OCI-LY7 (cell line): ENCODE measurements at regions of chr18 and their contacts with region 1.

Region 1: DNA sequence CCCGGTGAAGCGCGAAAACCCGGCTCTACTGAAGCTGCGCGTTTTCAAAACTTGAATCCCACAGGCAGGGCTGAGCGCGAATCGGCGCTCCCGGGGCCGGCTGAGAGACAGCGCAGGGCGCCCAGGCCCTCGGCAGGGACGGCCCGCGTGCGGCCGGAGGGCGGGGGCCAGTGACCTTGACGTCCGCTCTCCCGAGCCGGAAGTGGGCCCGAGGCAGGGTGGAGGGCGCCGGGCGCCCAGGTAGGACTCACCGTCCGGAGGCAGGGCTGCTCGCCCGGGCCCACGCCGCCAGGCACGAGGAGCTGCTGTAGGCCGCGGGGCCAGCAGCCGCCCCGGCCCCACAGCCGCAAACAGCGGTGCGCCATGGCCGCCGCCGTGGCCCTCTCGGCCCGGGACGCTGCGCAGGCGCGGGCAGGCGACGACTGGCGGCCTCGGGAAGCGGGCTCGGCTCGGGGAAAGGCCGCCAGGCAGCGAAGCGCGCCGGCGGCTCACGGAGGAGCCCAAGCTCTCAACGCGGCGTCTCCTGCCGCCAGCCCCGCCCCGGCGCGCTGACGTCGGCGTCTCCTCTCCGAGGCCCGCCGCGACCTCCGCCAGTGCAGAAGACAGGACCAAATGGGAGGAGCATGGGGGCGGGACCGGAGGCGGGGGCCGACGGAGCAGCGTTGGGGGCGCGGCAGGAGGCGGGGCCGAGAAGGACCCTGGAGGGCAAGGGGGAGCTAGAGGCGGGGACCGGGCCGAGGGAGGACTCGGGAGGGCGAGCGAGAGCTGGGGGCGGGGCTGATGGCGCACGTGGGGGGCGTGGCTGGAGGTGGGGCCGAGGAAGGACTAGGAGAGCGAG is at the start of gene AFG3L2:
- DNase-seq: peak; percentile 98
- H3K4me3 ChIP-seq: peak within 1 kb of the TSS; percentile 85
- H3K27ac ChIP-seq: peak within 1 kb of the TSS; percentile 65
- H3K4me1 ChIP-seq: peaks cover 16% of the 10 kb centered on the region
- CTCF ChIP-seq: 0 out of 2 replicates have a peak, but pooled peaks have one; percentile 6
- total RNA-seq, gene AFG3L2: 44.8 and 49.2 TPM in 2 replicates

Region 2: GRCh38 chr18:12049978-12050811 is 326.7 kb before region 1 on chr18:
- CTCF ChIA-PET with region 1: no interaction called
- POLR2A ChIA-PET with region 1: no interaction called
- intact Hi-C with region 1: loop called (anchors 5 kb)
- DNase-seq: peak; percentile 79
- H3K4me3 ChIP-seq: peak overlapping the region; percentile 47
- H3K27ac ChIP-seq: peak overlapping the region; percentile 82
- H3K4me1 ChIP-seq: peaks cover 60% of the 10 kb centered on the region
- CTCF ChIP-seq: no peak

Region 3: DNA sequence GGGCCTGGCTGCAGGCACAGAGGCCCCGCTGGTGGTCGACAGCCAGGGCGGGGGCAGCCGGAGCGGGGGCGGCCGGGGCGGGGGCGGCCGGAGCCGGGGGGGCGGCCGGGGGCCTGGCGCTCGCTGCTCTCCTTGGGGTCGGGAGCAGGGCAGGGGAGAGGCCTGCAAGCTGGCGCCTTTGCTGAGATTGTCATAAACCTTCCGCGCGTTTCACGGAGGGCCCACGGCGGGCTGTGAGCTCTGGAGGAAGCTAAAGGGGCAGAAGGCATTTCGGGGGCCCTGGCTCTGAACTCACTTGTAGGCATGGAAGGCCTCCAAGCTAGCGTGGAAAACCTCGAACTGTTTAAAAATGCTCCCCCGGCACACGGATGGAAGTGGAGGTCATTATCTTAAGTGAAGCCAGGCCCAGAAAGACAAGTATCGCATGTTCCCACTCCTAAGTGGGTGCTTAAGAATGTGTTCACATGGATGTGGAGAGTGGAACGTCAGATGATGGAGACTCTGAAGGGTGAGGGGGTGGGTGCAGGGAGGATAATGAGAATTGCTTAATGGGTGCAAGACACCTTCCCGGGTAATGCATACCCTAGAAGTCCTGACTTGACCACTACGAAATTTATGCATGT is 31.4 kb after region 1 on chr18:
- CTCF ChIA-PET with region 1: no interaction called
- POLR2A ChIA-PET with region 1: interaction called, 10 read pairs
- intact Hi-C with region 1: loop called (anchors 1 kb)
- DNase-seq: peak; percentile 57
- H3K4me3 ChIP-seq: peak overlapping the region; percentile 92
- H3K27ac ChIP-seq: peak overlapping the region; percentile 64
- H3K4me1 ChIP-seq: peaks cover 28% of the 10 kb centered on the region
- CTCF ChIP-seq: no peak

Region 4: DNA sequence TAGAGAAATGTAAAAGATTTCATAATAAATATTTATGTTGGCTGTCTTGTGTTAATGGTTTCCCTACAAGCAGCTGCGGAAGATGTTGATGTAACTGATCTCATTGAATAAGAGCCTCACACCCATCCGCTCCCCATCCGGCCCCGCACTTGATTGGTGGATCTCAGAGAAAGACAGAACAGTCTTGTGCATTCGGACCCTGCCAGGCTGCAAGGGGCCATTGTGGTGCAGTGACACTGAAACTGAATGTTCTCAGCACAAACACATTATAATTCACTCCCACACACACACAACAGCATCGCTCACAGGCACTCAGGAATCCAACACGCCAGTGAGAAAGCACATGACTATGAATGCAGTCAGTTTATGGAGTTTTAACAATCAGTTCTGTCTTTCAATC is 78.6 kb after region 1 on chr18:
- CTCF ChIA-PET with region 1: no interaction called
- POLR2A ChIA-PET with region 1: no interaction called
- intact Hi-C with region 1: no loop called
- DNase-seq: no peak
- H3K4me3 ChIP-seq: no peak overlapping the region
- H3K27ac ChIP-seq: no peak overlapping the region
- H3K4me1 ChIP-seq: no peaks in the 10 kb centered on the region
- CTCF ChIP-seq: no peak

Region 5: GRCh38 chr18:12883684-12884405 is 506.9 kb after region 1 on chr18 and contains the start of gene PTPN2:
- CTCF ChIA-PET with region 1: interaction called, 3 read pairs
- POLR2A ChIA-PET with region 1: no interaction called
- intact Hi-C with region 1: loop called (anchors 5 kb)
- DNase-seq: peak; percentile 95
- H3K4me3 ChIP-seq: peak within 1 kb of the TSS; percentile 78
- H3K27ac ChIP-seq: peak within 1 kb of the TSS; percentile 86
- H3K4me1 ChIP-seq: peaks cover 61% of the 10 kb centered on the region
- CTCF ChIP-seq: no peak
- total RNA-seq, gene PTPN2: 69.7 and 85.0 TPM in 2 replicates